CD8-positive, alpha-beta T cell (primary cell): ENCODE measurements at regions of chr1 and their contacts with region 1.

Region 1: GRCh38 chr1:77281491-77282186 is at the start of gene AK5:
- DNase-seq: peak in 8 of 9 experiments; percentile 13 to 76 (median 46)
- ATAC-seq: peak; percentile 70
- H3K4me3 ChIP-seq: peak within 1 kb of the TSS; percentile 55 to 75
- H3K4me3 Mint-ChIP-seq: peak within 1 kb of the TSS; percentile 79
- H3K27ac ChIP-seq: peak within 1 kb of the TSS in 1 of 2 experiments; percentile 33
- H3K27ac Mint-ChIP-seq: peak within 1 kb of the TSS; percentile 43
- H3K4me1 ChIP-seq: peaks cover 32% of the 10 kb centered on the region
- H3K4me1 Mint-ChIP-seq: peaks cover 41% of the 10 kb centered on the region
- H3K27me3 ChIP-seq: peaks cover 0 to 6% of the 10 kb centered on the region in 2 experiments
- H3K27me3 Mint-ChIP-seq: peaks cover 6% of the 10 kb centered on the region
- CTCF ChIP-seq: no peak
- total RNA-seq, gene AK5: 14.2 to 17.9 TPM

Region 2: DNA sequence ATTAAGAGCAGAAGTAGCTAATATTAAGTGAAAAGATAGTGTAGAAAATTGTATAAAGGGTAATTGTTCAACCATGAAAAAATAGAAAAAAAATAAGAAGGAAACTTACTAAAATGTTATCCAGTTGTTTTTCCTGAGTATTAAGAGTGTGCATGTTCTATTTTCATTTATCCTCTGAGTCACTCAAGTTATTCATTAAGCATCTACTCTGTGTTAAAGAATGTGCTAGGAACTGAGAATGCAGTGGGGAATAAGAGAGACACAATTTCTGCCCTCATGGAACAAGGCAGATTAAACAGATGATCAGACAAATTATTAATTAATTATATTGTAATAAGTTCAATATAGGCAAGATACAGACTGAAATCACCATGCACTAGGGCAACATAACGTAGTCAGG is 51.6 kb before region 1 on chr1:
- CTCF ChIA-PET with region 1: no interaction called
- POLR2A ChIA-PET with region 1: no interaction called
- intact Hi-C with region 1: loop called in 1 of 2 experiments (anchors 5 kb)
- DNase-seq: no peak
- ATAC-seq: no peak
- H3K4me3 ChIP-seq: no peak overlapping the region
- H3K4me3 Mint-ChIP-seq: no peak overlapping the region
- H3K27ac ChIP-seq: no peak overlapping the region
- H3K27ac Mint-ChIP-seq: no peak overlapping the region
- H3K4me1 ChIP-seq: no peaks in the 10 kb centered on the region
- H3K4me1 Mint-ChIP-seq: no peaks in the 10 kb centered on the region
- H3K27me3 ChIP-seq: no peaks in the 10 kb centered on the region
- H3K27me3 Mint-ChIP-seq: no peaks in the 10 kb centered on the region
- CTCF ChIP-seq: no peak

Region 3: GRCh38 chr1:77313491-77313890 is 31.9 kb after region 1 on chr1:
- CTCF ChIA-PET with region 1: no interaction called
- POLR2A ChIA-PET with region 1: interaction called, 8 read pairs
- intact Hi-C with region 1: loop called (anchors 5 kb)
- DNase-seq: peak in 6 of 9 experiments; percentile 25 to 66 (median 34)
- ATAC-seq: peak; percentile 51
- H3K4me3 ChIP-seq: no peak overlapping the region
- H3K4me3 Mint-ChIP-seq: no peak overlapping the region
- H3K27ac ChIP-seq: no peak overlapping the region
- H3K27ac Mint-ChIP-seq: peak overlapping the region; percentile 11
- H3K4me1 ChIP-seq: peaks cover 34% of the 10 kb centered on the region
- H3K4me1 Mint-ChIP-seq: peaks cover 34% of the 10 kb centered on the region
- H3K27me3 ChIP-seq: no peaks in the 10 kb centered on the region
- H3K27me3 Mint-ChIP-seq: no peaks in the 10 kb centered on the region
- CTCF ChIP-seq: no peak

Region 4: DNA sequence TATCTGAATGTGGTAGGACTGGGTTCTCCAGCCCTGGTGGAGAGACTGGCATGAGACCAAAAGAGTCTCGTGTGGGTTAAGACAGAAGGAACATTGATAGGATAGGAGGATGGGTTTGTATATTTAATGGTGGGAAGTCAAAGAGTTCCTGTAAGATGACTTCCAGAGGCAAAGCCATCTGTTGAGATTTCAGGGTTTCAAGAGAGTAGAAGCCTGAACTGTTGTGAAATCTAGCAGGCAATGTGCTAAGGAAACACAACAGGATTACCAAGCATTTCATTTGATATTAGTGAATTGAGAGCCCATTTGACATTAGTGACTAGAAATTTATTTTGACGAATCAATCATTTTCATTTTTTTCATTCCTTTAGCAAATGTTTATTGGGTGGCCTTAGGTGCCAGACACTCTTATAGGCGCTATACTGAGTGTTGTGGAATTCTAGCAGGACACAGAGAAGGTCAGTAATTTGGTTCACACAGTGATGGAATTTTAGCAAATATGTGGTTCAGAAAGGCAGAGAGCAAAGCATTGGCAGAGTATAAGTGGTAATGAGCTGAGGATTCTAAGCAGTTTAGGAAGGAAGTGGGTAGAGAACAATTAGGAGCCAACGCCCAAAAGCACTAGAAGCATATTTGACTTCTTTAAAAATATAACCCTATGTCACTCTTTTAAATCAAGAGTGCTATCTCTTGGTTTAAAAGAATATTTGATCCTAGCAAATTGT is 149.5 kb after region 1 on chr1:
- CTCF ChIA-PET with region 1: interaction called, 3 read pairs
- POLR2A ChIA-PET with region 1: no interaction called
- intact Hi-C with region 1: loop called in 1 of 2 experiments (anchors 5 kb)
- DNase-seq: peak in 2 of 9 experiments; percentile 50 to 68
- ATAC-seq: peak; percentile 95
- H3K4me3 ChIP-seq: peak overlapping the region in 1 of 2 experiments; percentile 5
- H3K4me3 Mint-ChIP-seq: no peak overlapping the region
- H3K27ac ChIP-seq: peak overlapping the region; percentile 38 to 82
- H3K27ac Mint-ChIP-seq: no peak overlapping the region
- H3K4me1 ChIP-seq: peaks cover 58% of the 10 kb centered on the region
- H3K4me1 Mint-ChIP-seq: peaks cover 26% of the 10 kb centered on the region
- H3K27me3 ChIP-seq: no peaks in the 10 kb centered on the region
- H3K27me3 Mint-ChIP-seq: no peaks in the 10 kb centered on the region
- CTCF ChIP-seq: no peak

Region 5: DNA sequence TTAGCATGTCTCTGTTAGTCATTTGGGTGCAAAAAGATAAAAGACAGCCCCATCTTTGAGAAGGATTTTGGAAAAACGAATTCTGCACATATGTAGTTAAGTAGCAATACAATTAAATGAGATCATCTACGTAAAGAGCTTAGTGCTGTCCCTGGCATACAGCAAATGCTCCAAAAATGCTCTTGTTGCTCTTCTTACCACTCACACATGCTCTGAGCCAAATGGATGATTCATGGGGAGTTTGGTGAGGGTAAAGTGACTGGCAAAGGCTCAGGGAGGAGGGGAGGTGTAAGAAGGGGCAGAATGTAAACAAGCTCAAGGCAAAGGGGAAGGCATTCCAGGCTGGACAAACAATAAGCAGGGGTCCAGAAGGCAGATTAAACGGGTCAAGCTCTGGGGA is 192.1 kb after region 1 on chr1:
- CTCF ChIA-PET with region 1: no interaction called
- POLR2A ChIA-PET with region 1: no interaction called
- intact Hi-C with region 1: no loop called
- DNase-seq: no peak
- ATAC-seq: no peak
- H3K4me3 ChIP-seq: no peak overlapping the region
- H3K4me3 Mint-ChIP-seq: no peak overlapping the region
- H3K27ac ChIP-seq: no peak overlapping the region
- H3K27ac Mint-ChIP-seq: no peak overlapping the region
- H3K4me1 ChIP-seq: no peaks in the 10 kb centered on the region
- H3K4me1 Mint-ChIP-seq: peaks cover 15% of the 10 kb centered on the region
- H3K27me3 ChIP-seq: no peaks in the 10 kb centered on the region
- H3K27me3 Mint-ChIP-seq: no peaks in the 10 kb centered on the region
- CTCF ChIP-seq: no peak

Region 6: DNA sequence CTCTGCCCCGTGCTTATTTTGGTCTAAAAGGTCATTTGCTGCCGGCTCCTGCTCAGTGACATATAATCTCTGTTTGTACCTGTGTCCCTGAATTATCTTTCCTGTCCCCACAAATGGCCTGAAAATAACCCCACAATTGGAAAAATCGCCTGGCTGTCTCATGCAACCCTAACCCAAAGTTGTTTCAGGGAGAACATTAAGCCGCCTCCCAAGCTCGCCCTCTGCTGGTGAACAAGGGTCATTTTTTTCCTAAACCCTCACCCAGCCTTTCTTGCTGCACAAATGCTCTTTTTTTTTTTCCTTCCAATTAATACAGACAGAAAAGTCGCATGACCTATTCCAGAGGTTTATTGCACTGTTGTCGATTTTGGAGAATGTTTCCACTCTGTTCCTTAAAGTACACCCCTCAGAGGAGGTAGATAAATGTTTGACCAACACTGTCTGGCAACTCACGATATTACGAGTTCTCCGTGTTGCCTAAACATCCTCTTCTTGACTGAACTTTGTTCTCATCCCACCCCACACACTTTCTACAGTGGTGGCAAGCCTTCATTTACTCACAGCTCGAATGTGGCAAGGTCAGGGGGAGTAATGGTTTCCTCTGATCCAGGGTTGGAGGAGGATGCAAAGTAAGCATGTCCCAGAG is 252.1 kb after region 1 on chr1:
- CTCF ChIA-PET with region 1: interaction called, 9 read pairs
- POLR2A ChIA-PET with region 1: no interaction called
- intact Hi-C with region 1: loop called in 1 of 2 experiments (anchors 2 kb)
- DNase-seq: peak; percentile 26 to 77 (median 61)
- ATAC-seq: peak; percentile 62
- H3K4me3 ChIP-seq: no peak overlapping the region
- H3K4me3 Mint-ChIP-seq: peak overlapping the region; percentile 38
- H3K27ac ChIP-seq: no peak overlapping the region
- H3K27ac Mint-ChIP-seq: peak overlapping the region; percentile 21
- H3K4me1 ChIP-seq: peaks cover 9% of the 10 kb centered on the region
- H3K4me1 Mint-ChIP-seq: peaks cover 7% of the 10 kb centered on the region
- H3K27me3 ChIP-seq: no peaks in the 10 kb centered on the region
- H3K27me3 Mint-ChIP-seq: no peaks in the 10 kb centered on the region
- CTCF ChIP-seq: peak; percentile 91